Common myeloid progenitor, CD34-positive (primary cell): ENCODE measurements at regions of chr3 and their contacts with region 1.

Region 1: GRCh38 chr3:13452490-13453335 is 27.4 kb upstream of the HDAC11 start:
- DNase-seq: peak; percentile 63 to 79 (median 74)
- H3K4me3 ChIP-seq: peak overlapping the region in 6 of 7 experiments; percentile 42 to 87 (median 76)
- H3K27ac ChIP-seq: no peak overlapping the region
- H3K4me1 ChIP-seq: peaks cover 6 to 18% (median 14%) of the 10 kb centered on the region in 4 experiments
- H3K27me3 ChIP-seq: no peaks in the 10 kb centered on the region

Region 2: GRCh38 chr3:13346481-13347389 is 106.0 kb before region 1 on chr3:
- CTCF ChIA-PET with region 1: interaction called, 69 read pairs
- POLR2A ChIA-PET with region 1: interaction called, 3 read pairs
- DNase-seq: peak; percentile 82 to 89 (median 84)
- H3K4me3 ChIP-seq: no peak overlapping the region
- H3K27ac ChIP-seq: peak overlapping the region in 1 of 2 experiments; percentile 14
- H3K4me1 ChIP-seq: peaks cover 6 to 46% (median 39%) of the 10 kb centered on the region in 4 experiments
- H3K27me3 ChIP-seq: no peaks in the 10 kb centered on the region

Region 3: GRCh38 chr3:13380971-13381370 is 71.7 kb before region 1 on chr3:
- CTCF ChIA-PET with region 1: interaction called, 11 read pairs
- POLR2A ChIA-PET with region 1: no interaction called
- DNase-seq: no peak
- H3K4me3 ChIP-seq: no peak overlapping the region
- H3K27ac ChIP-seq: no peak overlapping the region
- H3K4me1 ChIP-seq: peaks cover 0 to 3% (median under 1%) of the 10 kb centered on the region in 4 experiments
- H3K27me3 ChIP-seq: no peaks in the 10 kb centered on the region

Region 4: GRCh38 chr3:13397316-13397715 is 55.4 kb before region 1 on chr3:
- CTCF ChIA-PET with region 1: interaction called, 51 read pairs
- POLR2A ChIA-PET with region 1: no interaction called
- DNase-seq: no peak
- H3K4me3 ChIP-seq: no peak overlapping the region
- H3K27ac ChIP-seq: no peak overlapping the region
- H3K4me1 ChIP-seq: peaks cover 0 to 2% (median 0%) of the 10 kb centered on the region in 4 experiments
- H3K27me3 ChIP-seq: no peaks in the 10 kb centered on the region

Region 5: DNA sequence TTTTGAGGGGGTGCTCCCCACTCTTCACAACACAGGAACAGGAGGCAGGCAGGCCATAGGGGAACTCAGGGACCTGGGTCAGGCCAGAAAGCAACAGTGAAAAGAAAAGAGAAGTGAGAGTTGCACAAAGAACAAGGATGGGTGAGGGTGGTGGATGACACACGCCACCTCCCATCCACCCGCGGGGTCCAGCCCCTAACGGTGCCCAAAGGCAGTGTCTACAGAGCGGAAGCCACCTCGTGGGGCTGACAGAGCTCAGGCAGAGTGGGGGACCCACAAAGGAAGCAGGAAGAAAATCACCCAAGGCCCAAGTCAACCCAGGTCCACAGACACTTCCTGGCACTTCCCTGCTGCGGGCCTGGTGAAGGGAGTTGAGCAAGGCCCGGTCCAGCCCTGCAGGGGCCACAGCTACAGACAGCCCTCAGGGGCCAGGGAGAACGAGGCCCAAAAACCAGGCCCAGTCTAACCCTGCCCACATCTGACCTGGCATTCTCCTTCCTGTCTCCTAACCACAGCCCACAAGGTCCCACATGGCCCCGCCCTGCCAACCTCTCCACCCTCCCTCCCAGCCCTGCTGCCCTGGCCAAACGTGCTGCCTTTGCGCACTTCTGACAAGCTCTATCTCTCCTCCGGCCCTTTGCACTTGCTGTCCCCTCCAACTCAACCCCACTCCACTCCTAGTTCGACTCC is 38.5 kb before region 1 on chr3:
- CTCF ChIA-PET with region 1: interaction called, 45 read pairs
- POLR2A ChIA-PET with region 1: interaction called, 4 read pairs
- DNase-seq: peak; percentile 87 to 97 (median 95)
- H3K4me3 ChIP-seq: peak overlapping the region in 4 of 7 experiments; percentile 4 to 29 (median 18)
- H3K27ac ChIP-seq: peak overlapping the region; percentile 61 to 83
- H3K4me1 ChIP-seq: peaks cover 23 to 74% (median 72%) of the 10 kb centered on the region in 4 experiments
- H3K27me3 ChIP-seq: no peaks in the 10 kb centered on the region

Region 6: DNA sequence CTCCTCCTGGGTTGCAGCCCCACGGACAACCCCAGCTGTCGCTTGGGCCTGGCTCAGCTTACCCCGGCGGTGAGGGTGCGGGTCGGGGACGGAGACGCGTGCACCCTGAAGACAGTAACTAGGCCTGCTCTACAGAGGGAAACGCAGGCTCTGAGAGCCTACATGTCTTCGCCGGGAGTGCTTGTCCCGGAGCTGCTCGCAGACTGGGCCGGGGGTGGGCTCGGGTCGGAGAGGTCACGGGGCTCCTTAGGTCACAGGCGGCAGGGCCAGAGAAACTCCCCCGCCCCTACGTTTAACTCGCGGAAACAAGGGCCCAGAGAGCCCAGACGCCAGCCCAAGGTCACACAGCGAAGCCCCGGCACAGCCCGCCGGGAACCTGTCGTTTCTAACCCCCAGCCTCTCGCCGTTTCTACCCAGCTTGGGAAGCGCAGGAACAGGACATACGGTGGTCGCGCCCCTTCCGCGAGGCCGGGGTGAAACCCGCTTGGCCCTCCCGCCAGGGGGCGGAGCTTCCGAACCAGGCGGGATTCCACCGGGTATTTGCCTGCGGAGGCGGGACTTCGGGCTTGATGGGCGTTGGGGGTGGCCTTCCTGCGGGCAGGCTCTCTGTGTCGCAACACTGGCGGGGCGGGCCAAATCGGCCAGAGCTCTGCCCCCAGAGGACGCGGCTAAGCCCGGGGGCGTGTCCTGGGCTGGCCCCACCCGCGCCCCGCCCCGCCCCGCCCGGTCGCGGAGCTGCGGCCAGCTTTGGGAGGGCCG is 27.0 kb after region 1 on chr3 and contains the start of gene HDAC11:
- CTCF ChIA-PET with region 1: interaction called, 11 read pairs
- POLR2A ChIA-PET with region 1: no interaction called
- DNase-seq: peak; percentile 96 to 97 (median 97)
- H3K4me3 ChIP-seq: peak within 1 kb of the TSS; percentile 43 to 94 (median 80)
- H3K27ac ChIP-seq: peak within 1 kb of the TSS; percentile 61 to 80
- H3K4me1 ChIP-seq: peaks cover 0 to 32% (median 20%) of the 10 kb centered on the region in 4 experiments
- H3K27me3 ChIP-seq: peaks cover 0 to 3% (median 0%) of the 10 kb centered on the region in 5 experiments